ENCODE measurements at regions of chr7 and their contacts with region 1.

Region 1: DNA sequence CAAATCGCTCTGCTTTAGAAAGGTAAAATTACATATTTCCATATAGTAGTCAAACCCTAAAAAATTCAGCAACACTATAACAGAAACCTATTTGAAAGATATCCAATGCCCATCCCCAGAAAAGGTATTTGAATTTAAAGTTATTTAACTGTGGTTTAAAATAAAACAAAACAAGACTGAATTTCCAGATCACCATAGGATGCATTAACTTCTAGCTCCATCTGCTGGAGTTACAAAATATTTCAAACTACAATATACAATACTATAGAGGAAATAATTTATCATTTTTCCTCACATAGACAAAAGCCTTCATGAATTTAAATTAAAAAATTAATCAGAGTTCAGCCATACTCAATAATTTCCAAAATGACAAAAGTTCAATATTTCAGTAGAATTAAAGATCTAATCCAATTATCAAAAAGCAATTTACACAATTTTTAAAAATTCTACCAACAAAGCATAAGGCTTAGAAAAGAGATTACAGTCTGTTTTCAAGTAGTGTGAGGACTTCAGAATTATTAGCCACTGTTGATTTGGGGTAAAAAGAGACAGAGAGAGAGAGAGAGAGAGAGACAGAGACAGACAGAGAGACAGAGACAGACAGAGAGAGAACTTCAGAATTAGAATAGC is 75.9 kb downstream of the LMBR1 start:
- DNase-seq: no peak
- H3K4me3 Mint-ChIP-seq: no peak overlapping the region
- H3K27ac Mint-ChIP-seq: no peak overlapping the region
- H3K4me1 Mint-ChIP-seq: peaks cover 2% of the 10 kb centered on the region
- H3K27me3 Mint-ChIP-seq: no peaks in the 10 kb centered on the region

Region 2: DNA sequence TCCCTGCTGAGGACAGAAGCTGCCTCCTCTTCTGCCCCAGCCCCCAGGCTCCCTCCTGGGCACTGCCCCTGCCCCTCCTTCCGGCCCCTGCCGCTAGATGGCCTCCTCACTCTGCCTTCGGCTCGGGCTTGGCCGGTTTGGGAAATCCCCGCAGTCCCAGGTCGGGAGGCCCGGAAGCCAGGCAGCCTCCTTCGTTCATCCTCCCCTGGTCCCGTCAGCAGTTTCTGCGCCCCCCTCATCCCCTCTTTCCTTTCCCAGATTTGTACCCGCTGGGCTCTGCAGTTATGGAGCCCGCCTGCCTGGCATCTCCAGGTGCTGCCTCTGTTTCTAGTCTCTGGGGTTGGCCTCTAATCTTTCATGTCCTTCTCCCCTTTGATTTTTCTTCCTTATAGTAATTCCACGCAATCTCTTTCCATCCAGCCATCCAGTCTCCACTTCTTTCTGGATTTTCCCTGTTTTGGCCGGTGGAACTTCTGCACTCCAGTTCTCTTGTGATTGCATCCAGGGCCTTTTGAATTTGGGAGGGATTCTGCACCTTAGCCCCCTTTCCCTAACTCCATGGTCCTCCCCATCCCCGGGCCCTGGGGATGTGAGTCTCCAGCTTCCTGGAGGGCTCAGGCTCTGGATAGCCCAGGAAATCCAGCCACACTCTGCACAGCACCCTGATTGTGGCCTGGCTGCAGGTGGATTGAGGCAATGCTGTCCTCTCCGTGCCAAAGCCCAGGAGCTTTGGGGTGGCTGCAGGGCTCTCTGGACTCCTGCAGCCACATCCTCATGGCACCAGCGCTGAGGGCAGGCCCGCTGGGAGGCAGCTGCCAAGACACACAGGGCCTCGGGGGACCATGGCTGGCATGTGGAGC is 1001.5 kb before region 1 on chr7:
- CTCF ChIA-PET with region 1: no interaction called
- POLR2A ChIA-PET with region 1: no interaction called
- intact Hi-C with region 1: loop called (anchors 5 kb)
- DNase-seq: peak; percentile 82
- H3K4me3 Mint-ChIP-seq: no peak overlapping the region
- H3K27ac Mint-ChIP-seq: no peak overlapping the region
- H3K4me1 Mint-ChIP-seq: peaks cover 17% of the 10 kb centered on the region
- H3K27me3 Mint-ChIP-seq: peaks cover 45% of the 10 kb centered on the region

Region 3: GRCh38 chr7:156347132-156347531 is 469.9 kb before region 1 on chr7:
- CTCF ChIA-PET with region 1: no interaction called
- POLR2A ChIA-PET with region 1: no interaction called
- intact Hi-C with region 1: no loop called
- DNase-seq: no peak
- H3K4me3 Mint-ChIP-seq: no peak overlapping the region
- H3K27ac Mint-ChIP-seq: no peak overlapping the region
- H3K4me1 Mint-ChIP-seq: no peaks in the 10 kb centered on the region
- H3K27me3 Mint-ChIP-seq: no peaks in the 10 kb centered on the region

Region 4: DNA sequence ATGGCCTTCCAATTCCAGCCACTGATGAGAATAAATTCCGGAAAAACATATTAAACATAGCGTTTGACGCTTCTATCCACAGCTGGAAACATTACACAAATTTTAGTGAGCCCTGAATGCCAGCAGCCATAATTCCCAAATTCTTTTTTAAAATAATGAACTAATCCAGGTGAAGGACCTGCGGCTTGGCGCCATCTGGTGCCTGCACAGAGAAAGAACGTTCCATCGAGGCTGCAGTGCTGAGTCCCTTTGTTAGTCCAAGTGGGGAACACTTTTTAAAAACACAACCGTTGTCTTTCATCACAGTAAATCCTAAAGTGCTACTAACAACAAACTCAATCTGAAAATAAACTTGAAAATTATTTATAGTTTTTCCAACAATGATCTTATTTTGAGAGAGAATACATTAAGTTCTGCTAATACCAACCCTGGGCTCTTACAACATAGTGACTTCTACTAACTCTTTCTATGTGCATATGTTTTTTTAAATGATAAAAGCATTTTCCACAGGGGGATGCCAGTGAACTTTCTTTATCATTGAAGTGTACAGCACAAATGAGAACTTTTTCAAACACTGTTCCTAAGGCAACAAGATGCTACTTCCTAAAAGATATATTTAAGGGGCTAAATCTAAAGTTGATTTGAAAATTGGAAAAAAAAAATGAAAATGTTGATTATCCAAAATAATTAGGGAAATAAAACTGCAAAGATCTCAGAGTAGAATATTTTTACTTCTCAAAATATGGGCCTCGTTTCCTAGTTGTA is 343.4 kb before region 1 on chr7:
- CTCF ChIA-PET with region 1: no interaction called
- POLR2A ChIA-PET with region 1: no interaction called
- intact Hi-C with region 1: loop called (anchors 5 kb)
- DNase-seq: peak; percentile 43
- H3K4me3 Mint-ChIP-seq: no peak overlapping the region
- H3K27ac Mint-ChIP-seq: no peak overlapping the region
- H3K4me1 Mint-ChIP-seq: no peaks in the 10 kb centered on the region
- H3K27me3 Mint-ChIP-seq: peaks cover 18% of the 10 kb centered on the region

Region 5: DNA sequence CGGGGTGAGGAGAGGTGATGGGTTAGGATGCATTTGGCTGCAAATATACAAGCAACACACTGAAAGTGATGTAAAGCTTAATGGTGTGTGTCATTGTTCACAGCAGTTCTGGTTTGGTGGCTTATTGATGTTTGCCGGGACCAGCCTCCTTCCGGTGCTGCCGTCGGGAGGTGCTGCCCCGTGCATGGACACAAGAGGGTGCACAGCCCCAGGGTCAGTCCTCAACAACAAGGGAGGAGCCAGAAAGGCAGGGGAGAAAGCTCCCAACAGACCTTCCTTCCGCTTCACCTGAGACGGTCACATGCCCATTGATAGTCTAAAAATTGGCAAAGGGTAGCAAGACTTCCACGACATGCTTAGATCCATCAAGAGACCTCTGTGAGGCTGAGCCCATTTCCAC is 167.0 kb before region 1 on chr7:
- CTCF ChIA-PET with region 1: interaction called, 4 read pairs
- POLR2A ChIA-PET with region 1: no interaction called
- intact Hi-C with region 1: loop called (anchors 1 kb)
- DNase-seq: peak; percentile 40
- H3K4me3 Mint-ChIP-seq: no peak overlapping the region
- H3K27ac Mint-ChIP-seq: no peak overlapping the region
- H3K4me1 Mint-ChIP-seq: no peaks in the 10 kb centered on the region
- H3K27me3 Mint-ChIP-seq: peaks cover 54% of the 10 kb centered on the region

Region 6: GRCh38 chr7:156827587-156828203 is 10.6 kb after region 1 on chr7:
- CTCF ChIA-PET with region 1: no interaction called
- POLR2A ChIA-PET with region 1: no interaction called
- intact Hi-C with region 1: no loop called
- DNase-seq: no peak
- H3K4me3 Mint-ChIP-seq: no peak overlapping the region
- H3K27ac Mint-ChIP-seq: no peak overlapping the region
- H3K4me1 Mint-ChIP-seq: no peaks in the 10 kb centered on the region
- H3K27me3 Mint-ChIP-seq: no peaks in the 10 kb centered on the region

Region 7: GRCh38 chr7:156854654-156855053 is 37.6 kb after region 1 on chr7:
- CTCF ChIA-PET with region 1: no interaction called
- POLR2A ChIA-PET with region 1: no interaction called
- intact Hi-C with region 1: no loop called
- DNase-seq: no peak
- H3K4me3 Mint-ChIP-seq: no peak overlapping the region
- H3K27ac Mint-ChIP-seq: no peak overlapping the region
- H3K4me1 Mint-ChIP-seq: peaks cover 4% of the 10 kb centered on the region
- H3K27me3 Mint-ChIP-seq: no peaks in the 10 kb centered on the region

Measured in activated CD4-positive, alpha-beta memory T cell treated with anti-CD3 and anti-CD28 coated beads for 36 hours (primary cell).